Activated naive CD4-positive, alpha-beta T cell treated with anti-CD3 and anti-CD28 coated beads for 36 hours (primary cell): ENCODE measurements at regions of chr16 and their contacts with region 1.

Region 1: DNA sequence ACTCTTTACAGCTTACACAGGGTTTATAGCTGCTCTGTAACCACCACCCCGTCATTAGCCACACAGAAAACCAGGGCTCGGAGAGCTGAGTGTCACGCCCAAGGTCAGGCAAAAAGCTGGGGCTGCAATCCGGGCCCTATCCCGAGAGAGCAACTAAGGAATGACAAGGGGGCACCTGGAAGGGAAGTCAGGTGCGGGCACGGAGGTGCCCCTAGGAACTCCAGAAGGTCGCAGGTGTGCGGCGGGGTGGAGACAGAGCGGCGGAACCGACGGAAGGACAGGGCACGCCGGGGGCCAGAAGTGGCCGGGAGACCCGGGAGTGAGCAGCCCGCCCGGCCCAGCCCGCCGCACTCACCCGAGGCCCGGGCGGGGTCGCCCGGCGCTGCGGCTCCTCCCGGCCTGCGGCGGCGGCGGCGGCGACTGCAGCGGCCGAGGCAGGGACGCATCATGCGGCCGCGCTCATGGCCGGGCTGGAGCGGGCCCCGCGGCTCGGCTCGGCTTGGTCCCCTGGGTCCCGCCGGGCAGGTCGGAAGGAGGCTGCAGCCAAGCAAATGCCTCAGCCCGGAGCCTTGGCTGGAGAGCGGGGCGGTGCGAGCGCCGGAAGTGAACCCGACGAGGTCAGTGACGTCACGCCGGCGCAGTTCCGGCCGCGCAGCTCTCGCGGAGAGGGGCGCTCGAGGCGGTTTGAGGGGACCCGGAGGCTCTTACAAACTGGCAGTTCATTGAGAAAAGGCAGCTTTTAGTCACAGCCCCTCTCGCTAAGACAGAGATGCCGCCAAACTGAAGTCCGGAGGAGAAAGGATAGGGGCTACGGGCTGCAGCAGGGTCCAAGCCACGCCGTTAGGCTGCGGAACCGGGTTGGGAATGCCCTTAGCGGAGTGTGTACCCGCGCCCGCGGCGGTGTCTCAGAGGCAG is at the start of gene ZDHHC7:
- DNase-seq: peak; percentile 87
- H3K4me3 Mint-ChIP-seq: peak within 1 kb of the TSS; percentile 98
- H3K27ac Mint-ChIP-seq: peak within 1 kb of the TSS; percentile 98
- H3K4me1 Mint-ChIP-seq: peaks cover 31% of the 10 kb centered on the region
- H3K27me3 Mint-ChIP-seq: no peaks in the 10 kb centered on the region
- total RNA-seq, gene ZDHHC7: 16.6 to 17.9 TPM

Region 2: GRCh38 chr16:85055503-85056210 is 44.5 kb after region 1 on chr16:
- CTCF ChIA-PET with region 1: no interaction called
- intact Hi-C with region 1: loop called (anchors 1 kb)
- DNase-seq: peak; percentile 77
- H3K4me3 Mint-ChIP-seq: peak overlapping the region; percentile 64
- H3K27ac Mint-ChIP-seq: peak overlapping the region; percentile 84
- H3K4me1 Mint-ChIP-seq: peaks cover 39% of the 10 kb centered on the region
- H3K27me3 Mint-ChIP-seq: no peaks in the 10 kb centered on the region

Region 3: DNA sequence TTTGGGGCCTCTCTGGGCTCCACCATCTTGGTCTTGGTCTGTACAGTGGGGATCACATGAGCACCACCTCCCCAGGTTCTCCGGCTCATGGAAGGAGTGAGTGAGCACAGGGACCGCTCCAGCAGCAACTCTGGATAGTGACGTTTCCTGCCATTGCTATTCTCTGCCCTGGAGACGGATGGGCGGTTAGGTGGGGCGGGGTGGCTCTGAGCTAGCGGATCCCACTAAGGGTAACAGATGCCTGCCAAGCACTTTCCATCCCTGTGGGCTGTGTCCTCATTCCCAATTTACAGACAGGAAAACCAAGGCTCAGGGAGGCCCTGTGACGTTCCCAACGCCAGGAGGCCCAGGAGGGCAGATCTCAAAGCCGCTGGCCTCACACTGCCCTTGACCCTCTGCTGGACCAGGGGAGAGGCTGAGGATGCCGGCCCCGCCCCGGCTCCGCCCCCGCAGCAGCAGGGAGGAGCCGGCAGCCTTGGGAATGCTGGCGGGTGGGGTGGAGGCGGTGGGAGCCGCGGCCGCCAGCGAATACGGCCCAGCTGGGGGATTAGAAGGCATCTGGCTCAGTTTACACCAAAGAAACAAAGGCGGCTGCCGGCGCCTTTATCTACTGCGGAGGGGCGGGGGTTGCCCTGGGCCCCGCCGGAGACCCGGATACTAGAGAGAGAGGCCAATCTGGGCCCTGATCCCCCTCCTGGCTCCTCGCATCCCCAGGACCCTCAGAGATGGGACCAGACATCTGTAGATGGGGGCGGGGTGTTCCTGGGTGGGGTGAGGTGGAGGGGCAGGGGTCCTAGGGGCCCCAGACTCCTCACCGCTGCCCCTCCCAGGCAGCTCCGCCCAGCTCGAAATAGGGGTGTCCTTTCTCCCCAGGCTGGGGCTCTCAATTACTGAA is 223.4 kb after region 1 on chr16:
- CTCF ChIA-PET with region 1: no interaction called
- intact Hi-C with region 1: no loop called
- DNase-seq: no peak
- H3K4me3 Mint-ChIP-seq: no peak overlapping the region
- H3K27ac Mint-ChIP-seq: no peak overlapping the region
- H3K4me1 Mint-ChIP-seq: peaks cover 4% of the 10 kb centered on the region
- H3K27me3 Mint-ChIP-seq: peaks cover 28% of the 10 kb centered on the region

Region 4: DNA sequence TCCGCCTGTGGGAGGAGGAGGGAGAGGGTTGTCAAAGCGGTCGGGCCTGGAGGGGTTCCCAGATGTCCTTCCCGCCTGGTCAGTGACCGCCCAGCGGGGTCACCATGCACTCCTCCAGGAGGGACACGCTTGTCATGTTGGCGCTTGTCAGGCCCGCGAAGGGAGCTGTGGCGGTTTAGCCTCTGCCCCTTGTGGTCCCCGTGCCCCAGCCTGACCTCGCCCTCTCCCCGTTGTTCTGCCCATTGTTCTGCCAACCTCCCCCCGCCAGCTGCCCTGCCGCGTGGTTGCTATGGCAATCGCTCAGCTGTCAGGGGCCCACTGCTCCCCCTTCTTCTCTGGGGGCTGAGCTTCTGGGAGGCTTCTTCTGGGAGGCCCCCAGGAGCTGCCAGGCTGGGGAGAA is 247.4 kb after region 1 on chr16:
- CTCF ChIA-PET with region 1: no interaction called
- intact Hi-C with region 1: no loop called
- DNase-seq: no peak
- H3K4me3 Mint-ChIP-seq: no peak overlapping the region
- H3K27ac Mint-ChIP-seq: no peak overlapping the region
- H3K4me1 Mint-ChIP-seq: peaks cover 5% of the 10 kb centered on the region
- H3K27me3 Mint-ChIP-seq: peaks cover 8% of the 10 kb centered on the region

Region 5: DNA sequence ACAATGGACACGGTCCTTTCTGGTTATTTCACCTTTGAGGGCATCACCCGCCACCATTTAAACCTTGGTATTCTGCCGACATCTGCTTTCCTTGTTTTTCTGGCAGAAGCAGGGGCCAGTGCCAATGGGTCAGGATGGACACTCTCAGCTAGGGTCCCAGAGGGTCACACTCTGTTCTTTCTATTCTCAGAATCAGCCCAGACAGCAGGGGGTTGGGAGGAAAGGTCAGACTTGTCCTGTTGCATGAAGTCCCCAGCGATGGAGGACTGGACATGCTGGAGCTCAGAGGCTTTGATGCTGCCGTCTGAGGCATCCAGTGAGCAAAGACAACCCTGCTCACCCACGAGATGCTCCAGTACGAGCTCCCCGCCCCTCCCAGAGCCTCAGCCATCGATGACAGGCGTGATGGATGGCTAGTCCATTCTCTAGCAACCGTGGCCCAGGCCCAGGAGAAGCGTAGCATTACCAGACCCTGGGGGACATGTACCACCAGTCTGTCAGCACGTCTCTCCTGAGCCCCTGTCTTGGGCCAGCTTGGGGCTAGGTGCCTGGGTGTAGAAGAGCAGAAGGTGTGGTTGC is 1629.2 kb after region 1 on chr16:
- CTCF ChIA-PET with region 1: no interaction called
- intact Hi-C with region 1: no loop called
- DNase-seq: no peak
- H3K4me3 Mint-ChIP-seq: no peak overlapping the region
- H3K27ac Mint-ChIP-seq: no peak overlapping the region
- H3K4me1 Mint-ChIP-seq: no peaks in the 10 kb centered on the region
- H3K27me3 Mint-ChIP-seq: peaks cover 2% of the 10 kb centered on the region